ENCODE measurements at regions of chr11 and their contacts with region 1.

Region 1: DNA sequence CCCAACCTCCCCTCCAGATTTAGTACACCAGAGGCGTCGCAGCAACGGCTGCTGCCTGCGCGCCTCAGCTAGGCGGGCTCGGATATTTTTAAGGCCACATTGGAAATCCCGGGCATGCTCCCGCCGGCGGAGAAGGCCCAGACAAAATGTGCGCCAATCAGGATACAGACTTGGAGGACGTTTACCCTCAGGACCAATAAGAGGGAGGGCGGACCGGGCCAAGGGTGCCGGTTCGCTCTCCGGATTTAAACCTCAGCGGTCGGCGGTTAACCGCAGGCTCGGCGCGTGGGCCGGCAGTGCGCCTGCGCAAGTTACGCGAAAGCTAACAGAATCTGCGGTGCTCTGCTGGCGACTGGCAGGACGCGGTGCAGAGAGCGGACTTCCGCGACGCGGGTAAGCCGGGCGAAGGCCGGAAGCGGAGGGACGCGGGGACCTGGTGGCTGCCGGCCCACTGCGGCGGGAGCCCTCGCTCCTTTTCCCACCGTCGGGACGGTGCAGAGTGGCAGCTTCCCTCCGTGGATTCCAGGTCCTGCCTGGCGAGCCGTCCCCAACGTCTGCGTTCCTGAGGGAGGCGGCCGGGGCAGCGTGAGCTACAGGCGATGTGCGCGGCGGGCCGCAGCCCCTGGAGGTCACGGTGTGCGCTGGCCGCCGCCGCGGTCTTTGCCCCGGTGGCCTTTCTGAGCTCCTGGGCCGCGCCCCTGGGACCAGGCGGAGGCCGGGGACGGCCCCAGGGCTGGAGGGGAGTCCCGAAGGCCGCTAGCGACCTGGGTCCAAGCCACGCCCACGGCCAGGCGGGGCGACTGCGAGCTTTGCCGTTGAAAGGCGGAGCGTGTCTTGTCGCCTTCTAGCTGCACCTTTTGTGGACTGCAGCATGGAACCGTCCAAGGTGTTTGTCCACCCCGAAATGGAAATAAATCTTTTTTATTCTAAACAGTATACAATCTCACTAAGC is at the start of gene HYLS1:
- H3K4me3 ChIP-seq: peak within 1 kb of the TSS; percentile 78
- H3K27ac ChIP-seq: peak within 1 kb of the TSS; percentile 76
- H3K4me1 ChIP-seq: no peaks in the 10 kb centered on the region
- CTCF ChIP-seq: peak; percentile 42

Region 2: GRCh38 chr11:125649465-125650166 is 238.0 kb before region 1 on chr11:
- CTCF ChIA-PET with region 1: no interaction called
- POLR2A ChIA-PET with region 1: no interaction called
- H3K4me3 ChIP-seq: no peak overlapping the region
- H3K27ac ChIP-seq: no peak overlapping the region
- H3K4me1 ChIP-seq: no peaks in the 10 kb centered on the region
- CTCF ChIP-seq: no peak

Region 3: GRCh38 chr11:125902927-125903710 is 15.5 kb after region 1 on chr11 and contains the start of gene PUS3:
- CTCF ChIA-PET with region 1: interaction called, 3 read pairs
- POLR2A ChIA-PET with region 1: interaction called, 26 read pairs
- H3K4me3 ChIP-seq: peak within 1 kb of the TSS; percentile 77
- H3K27ac ChIP-seq: no peak within 1 kb of the TSS
- H3K4me1 ChIP-seq: no peaks in the 10 kb centered on the region
- CTCF ChIP-seq: no peak